AG04449 (cell line): ENCODE measurements at regions of chr19 and their contacts with region 1.

Region 1: GRCh38 chr19:6048808-6049405 is 61.4 kb downstream of the RFX2 start:
- DNase-seq: no peak
- H3K4me3 ChIP-seq: no peak overlapping the region
- CTCF ChIP-seq: peak; percentile 86

Region 2: GRCh38 chr19:5987077-5987818 is 61.7 kb before region 1 on chr19:
- CTCF ChIA-PET with region 1: interaction called, 65 read pairs
- POLR2A ChIA-PET with region 1: no interaction called
- DNase-seq: peak; percentile 34
- H3K4me3 ChIP-seq: peak overlapping the region; percentile 42
- CTCF ChIP-seq: peak; percentile 72

Region 3: GRCh38 chr19:6030214-6030507 is 18.7 kb before region 1 on chr19:
- CTCF ChIA-PET with region 1: interaction called, 53 read pairs
- POLR2A ChIA-PET with region 1: no interaction called
- DNase-seq: no peak
- H3K4me3 ChIP-seq: no peak overlapping the region
- CTCF ChIP-seq: no peak

Region 4: DNA sequence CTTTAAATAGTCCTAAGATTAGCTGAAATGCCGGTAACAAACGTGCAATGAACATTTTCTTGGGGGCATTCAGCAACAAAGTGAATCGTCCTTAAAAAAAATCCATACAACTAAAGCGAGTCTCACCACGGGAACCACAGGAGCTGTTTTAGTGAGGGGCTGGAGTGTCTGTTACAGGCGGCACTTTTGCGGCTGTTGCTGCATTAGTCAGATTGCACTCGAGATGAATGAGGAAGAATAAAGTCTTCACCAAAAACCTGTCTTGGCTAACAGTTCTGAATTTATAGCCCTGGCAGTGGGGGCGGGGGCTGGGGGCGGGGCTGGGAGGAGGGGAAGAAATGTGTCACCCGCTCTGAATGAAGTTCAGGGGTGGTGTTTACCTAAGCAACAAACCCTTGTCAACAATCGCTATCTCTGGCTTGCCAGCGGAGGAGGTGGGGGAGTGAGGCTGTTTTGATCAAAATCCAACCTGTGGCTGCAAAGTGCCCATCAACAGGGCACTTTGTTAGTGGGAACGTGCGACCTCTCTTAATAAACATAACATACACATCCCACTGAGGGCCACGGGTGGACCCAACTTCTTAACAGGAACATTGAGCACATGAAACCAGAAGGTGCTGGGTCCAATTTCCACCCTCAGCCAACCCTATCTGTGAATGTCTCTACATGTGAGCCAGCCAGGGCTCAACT is 16.9 kb after region 1 on chr19:
- CTCF ChIA-PET with region 1: interaction called, 27 read pairs
- POLR2A ChIA-PET with region 1: no interaction called
- DNase-seq: no peak
- H3K4me3 ChIP-seq: no peak overlapping the region
- CTCF ChIP-seq: no peak

Region 5: DNA sequence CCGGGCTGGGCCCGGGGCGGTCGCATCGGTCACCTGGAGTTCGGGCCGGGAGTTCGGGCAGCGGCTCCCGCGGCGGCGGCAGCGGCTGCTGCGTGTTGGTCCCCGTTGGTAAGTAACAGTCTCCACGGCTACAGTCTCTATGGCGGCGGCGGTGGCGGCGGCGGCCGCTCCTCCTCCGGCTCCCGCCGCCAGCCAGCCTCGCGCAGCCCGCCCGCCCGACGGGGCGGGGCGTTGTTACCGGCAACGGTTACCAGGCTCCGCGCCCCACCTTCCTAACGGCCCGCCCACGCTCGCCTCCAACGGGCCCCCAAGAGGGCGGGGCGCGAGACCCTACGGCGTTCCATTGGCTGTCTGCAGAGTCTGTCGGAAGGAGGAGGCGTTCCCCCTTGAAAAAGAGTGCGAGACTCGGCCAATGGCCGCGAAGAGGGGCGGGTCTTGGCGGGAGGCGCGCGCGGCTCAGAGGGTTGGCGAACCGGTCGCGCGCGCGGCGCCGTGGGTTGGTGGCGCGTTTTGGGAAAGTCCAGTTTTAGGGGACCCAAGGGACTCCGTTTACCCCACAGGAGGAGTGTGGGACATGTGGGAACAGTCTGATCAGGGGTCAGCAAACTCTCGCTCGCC is 61.6 kb after region 1 on chr19 and contains the start of gene RFX2:
- CTCF ChIA-PET with region 1: interaction called, 74 read pairs
- POLR2A ChIA-PET with region 1: no interaction called
- DNase-seq: peak; percentile 85
- H3K4me3 ChIP-seq: peak within 1 kb of the TSS; percentile 66
- CTCF ChIP-seq: no peak

Region 6: DNA sequence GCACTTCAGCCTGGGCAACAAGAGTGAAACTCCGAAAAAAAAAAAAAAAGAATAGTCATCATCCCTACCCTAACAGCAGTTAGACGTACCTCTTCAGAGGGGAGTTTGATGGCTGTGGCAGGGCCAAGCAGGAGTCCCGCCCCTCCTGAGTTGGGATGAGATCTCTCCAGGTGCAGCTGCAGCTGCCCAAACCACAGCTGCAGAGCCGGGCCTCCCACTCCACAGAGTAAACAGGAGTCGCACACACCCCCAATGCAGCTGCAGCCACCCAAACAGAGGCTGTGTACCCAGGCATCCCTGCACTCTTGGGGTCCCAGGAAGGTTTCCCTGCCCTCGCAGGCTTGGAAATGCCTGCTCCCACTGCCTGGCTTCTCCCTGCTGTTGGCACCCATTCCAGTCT is 248.3 kb after region 1 on chr19:
- CTCF ChIA-PET with region 1: interaction called, 28 read pairs
- POLR2A ChIA-PET with region 1: no interaction called
- DNase-seq: no peak
- H3K4me3 ChIP-seq: no peak overlapping the region
- CTCF ChIP-seq: no peak